Caco-2 (cell line): ENCODE measurements at regions of chr18 and their contacts with region 1.

Region 1: DNA sequence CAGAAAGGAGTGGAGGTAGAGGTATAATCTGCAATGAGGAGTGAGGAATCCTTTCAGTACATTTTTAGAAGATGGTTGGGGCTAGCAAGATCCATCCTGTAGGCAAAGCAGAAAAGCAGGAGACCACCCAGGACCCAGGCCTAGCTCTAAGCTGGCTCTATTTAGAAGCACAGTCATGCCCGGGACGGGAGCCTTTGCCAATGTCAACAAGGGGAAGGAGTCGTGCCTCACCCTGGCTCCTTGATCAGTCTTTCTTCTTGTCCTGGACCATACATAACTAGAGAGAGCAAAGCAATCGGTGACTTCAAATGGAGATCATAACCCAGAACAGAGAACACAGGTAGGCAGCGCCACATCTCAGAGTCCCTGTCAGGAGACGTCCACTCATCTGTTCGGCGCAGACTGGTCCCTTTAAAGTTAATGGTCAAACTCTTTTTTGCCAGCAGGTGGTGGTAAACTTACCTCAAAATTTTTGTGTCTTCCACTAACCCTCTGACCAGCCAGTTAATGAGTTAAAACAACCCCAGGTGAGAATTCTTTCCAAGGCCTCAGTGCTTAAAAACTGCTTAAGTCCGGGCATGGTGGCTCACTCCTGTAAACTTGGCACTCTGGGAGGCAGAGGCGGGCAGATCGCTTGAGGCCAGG is 8.0 kb downstream of the MC5R start:
- DNase-seq: peak in 1 of 2 experiments; percentile 32
- H3K4me3 ChIP-seq: no peak overlapping the region
- H3K4me3 Mint-ChIP-seq: no peak overlapping the region
- H3K27ac Mint-ChIP-seq: no peak overlapping the region
- H3K4me1 ChIP-seq: no peaks in the 10 kb centered on the region
- H3K4me1 Mint-ChIP-seq: no peaks in the 10 kb centered on the region
- H3K27me3 ChIP-seq: no peaks in the 10 kb centered on the region
- H3K27me3 Mint-ChIP-seq: peaks cover 26% of the 10 kb centered on the region
- CTCF ChIP-seq: peak; percentile 25 to 52

Region 2: GRCh38 chr18:13909141-13909940 is 77.4 kb after region 1 on chr18:
- CTCF ChIA-PET with region 1: no interaction called
- POLR2A ChIA-PET with region 1: no interaction called
- intact Hi-C with region 1: loop called (anchors 10 kb)
- DNase-seq: no peak
- H3K4me3 ChIP-seq: no peak overlapping the region
- H3K4me3 Mint-ChIP-seq: no peak overlapping the region
- H3K27ac Mint-ChIP-seq: no peak overlapping the region
- H3K4me1 ChIP-seq: no peaks in the 10 kb centered on the region
- H3K4me1 Mint-ChIP-seq: no peaks in the 10 kb centered on the region
- H3K27me3 ChIP-seq: no peaks in the 10 kb centered on the region; the same call in 1 of the 2 replicates
- H3K27me3 Mint-ChIP-seq: peaks cover under 1% of the 10 kb centered on the region
- CTCF ChIP-seq: no peak

Region 3: DNA sequence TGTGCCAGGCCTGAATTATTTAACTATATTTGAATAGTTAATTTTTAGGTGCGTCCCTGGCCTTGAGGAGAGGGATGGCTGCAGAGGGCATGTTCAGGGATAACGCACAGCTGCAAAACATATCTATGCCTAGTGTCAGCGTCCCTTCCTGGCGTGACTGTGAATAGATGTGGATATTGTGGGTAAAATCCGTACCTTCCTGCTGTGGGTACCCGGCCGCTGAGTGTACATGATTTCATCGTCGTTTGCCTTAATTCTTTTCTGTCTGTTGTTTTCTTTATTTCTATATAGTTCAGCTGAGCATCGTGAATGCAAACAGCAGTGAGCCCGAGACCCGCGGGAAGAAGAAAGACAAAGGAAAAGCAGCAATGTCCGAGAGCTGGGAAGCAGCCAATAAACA is 108.3 kb after region 1 on chr18:
- CTCF ChIA-PET with region 1: no interaction called
- POLR2A ChIA-PET with region 1: no interaction called
- intact Hi-C with region 1: loop called (anchors 5 kb)
- DNase-seq: no peak
- H3K4me3 ChIP-seq: no peak overlapping the region
- H3K4me3 Mint-ChIP-seq: no peak overlapping the region
- H3K27ac Mint-ChIP-seq: no peak overlapping the region
- H3K4me1 ChIP-seq: no peaks in the 10 kb centered on the region
- H3K4me1 Mint-ChIP-seq: no peaks in the 10 kb centered on the region
- H3K27me3 ChIP-seq: no peaks in the 10 kb centered on the region
- H3K27me3 Mint-ChIP-seq: peaks cover 7% of the 10 kb centered on the region
- CTCF ChIP-seq: no peak

Region 4: DNA sequence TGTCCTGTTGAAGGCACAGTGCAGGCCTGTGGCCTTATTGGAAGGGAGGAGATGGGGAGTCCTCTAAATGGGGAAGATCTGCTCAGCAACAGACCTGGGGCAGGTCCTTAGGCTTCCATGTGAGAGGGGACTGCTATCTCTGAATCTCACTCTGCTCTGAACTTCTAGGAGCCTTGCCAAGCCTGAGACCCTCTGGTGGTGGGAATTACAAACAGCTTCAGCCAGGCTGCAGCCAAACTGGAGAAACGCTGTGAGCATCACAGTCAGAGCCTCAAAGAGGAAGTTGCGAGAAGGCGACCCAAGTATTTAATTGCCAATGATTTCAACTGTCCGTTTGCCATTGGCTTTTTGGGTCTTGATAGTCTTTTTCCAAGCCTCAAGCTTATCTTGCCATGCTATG is 150.2 kb after region 1 on chr18:
- CTCF ChIA-PET with region 1: no interaction called
- POLR2A ChIA-PET with region 1: no interaction called
- intact Hi-C with region 1: loop called (anchors 5 kb)
- DNase-seq: peak in 1 of 2 experiments; percentile 37
- H3K4me3 ChIP-seq: no peak overlapping the region
- H3K4me3 Mint-ChIP-seq: no peak overlapping the region
- H3K27ac Mint-ChIP-seq: no peak overlapping the region
- H3K4me1 ChIP-seq: no peaks in the 10 kb centered on the region
- H3K4me1 Mint-ChIP-seq: no peaks in the 10 kb centered on the region
- H3K27me3 ChIP-seq: no peaks in the 10 kb centered on the region
- H3K27me3 Mint-ChIP-seq: peaks cover 2% of the 10 kb centered on the region
- CTCF ChIP-seq: peak in 1 of 2 experiments; percentile 57

Region 5: GRCh38 chr18:14086458-14087231 is 254.7 kb after region 1 on chr18:
- CTCF ChIA-PET with region 1: no interaction called
- POLR2A ChIA-PET with region 1: no interaction called
- intact Hi-C with region 1: loop called (anchors 1 kb)
- DNase-seq: peak in 1 of 2 experiments; percentile 40
- H3K4me3 ChIP-seq: no peak overlapping the region
- H3K4me3 Mint-ChIP-seq: no peak overlapping the region
- H3K27ac Mint-ChIP-seq: no peak overlapping the region
- H3K4me1 ChIP-seq: no peaks in the 10 kb centered on the region
- H3K4me1 Mint-ChIP-seq: peaks cover 5% of the 10 kb centered on the region
- H3K27me3 ChIP-seq: no peaks in the 10 kb centered on the region
- H3K27me3 Mint-ChIP-seq: no peaks in the 10 kb centered on the region
- CTCF ChIP-seq: peak; percentile 67 to 72